ENCODE measurements at regions of chr2 and their contacts with region 1.

Region 1: DNA sequence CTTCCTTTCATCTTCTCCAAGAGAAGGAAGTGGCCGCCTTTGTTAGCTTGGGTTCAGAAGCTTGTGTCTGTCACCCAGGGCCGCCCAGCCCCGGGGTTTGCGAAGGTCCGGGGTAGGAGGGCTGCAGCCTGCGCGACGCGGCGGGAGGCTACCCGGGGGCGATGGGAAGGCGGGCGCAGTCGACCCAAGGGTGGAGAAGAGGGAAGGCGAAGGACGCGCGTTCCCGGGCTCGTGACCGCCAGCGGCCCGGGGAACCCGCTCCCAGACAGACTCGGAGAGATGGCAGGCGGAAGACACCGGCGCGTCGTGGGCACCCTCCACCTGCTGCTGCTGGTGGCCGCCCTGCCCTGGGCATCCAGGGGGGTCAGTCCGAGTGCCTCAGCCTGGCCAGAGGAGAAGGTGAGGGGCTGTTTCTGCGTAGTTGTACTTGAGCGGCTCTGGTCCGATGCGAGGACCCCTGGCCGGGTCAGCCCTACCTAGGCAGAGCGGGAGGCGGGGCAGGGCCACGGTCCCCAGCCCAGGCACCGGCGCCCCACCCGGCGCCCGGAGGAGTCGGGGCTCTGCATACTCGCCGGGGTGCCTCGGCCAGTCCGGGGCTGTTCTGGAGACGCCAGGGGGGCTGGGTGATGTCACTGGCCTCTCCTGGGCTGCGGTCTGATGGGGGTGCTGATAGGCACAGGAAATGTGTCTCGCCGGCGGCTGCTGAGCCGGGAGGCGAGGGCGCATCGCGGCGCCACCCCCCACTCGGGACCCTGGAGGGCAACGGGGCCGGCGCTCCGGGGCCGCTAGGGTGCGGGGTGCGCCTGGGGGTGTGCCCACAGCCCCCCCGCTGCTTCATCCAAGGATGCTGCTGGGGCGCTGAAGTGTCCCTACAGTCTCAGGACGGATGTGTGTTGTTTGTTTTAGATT is at the start of gene QPCT:
- DNase-seq: peak; percentile 47 to 85 (median 76)
- ATAC-seq: peak; percentile 88
- H3K4me3 ChIP-seq: peak within 1 kb of the TSS; percentile 52 to 55
- H3K4me3 Mint-ChIP-seq: peak within 1 kb of the TSS; percentile 83
- H3K27ac ChIP-seq: no peak within 1 kb of the TSS
- H3K27ac Mint-ChIP-seq: peak within 1 kb of the TSS; percentile 67
- H3K4me1 ChIP-seq: peaks cover 4% of the 10 kb centered on the region
- H3K4me1 Mint-ChIP-seq: peaks cover 17% of the 10 kb centered on the region
- H3K27me3 ChIP-seq: no peaks in the 10 kb centered on the region
- H3K27me3 Mint-ChIP-seq: peaks cover 10% of the 10 kb centered on the region
- CTCF ChIP-seq: no peak
- total RNA-seq, gene QPCT: 0.57 to 1.00 TPM

Region 2: GRCh38 chr2:37297632-37298031 is 47.1 kb before region 1 on chr2:
- CTCF ChIA-PET with region 1: no interaction called
- POLR2A ChIA-PET with region 1: no interaction called
- intact Hi-C with region 1: loop called in 1 of 2 experiments (anchors 1 kb)
- DNase-seq: no peak
- ATAC-seq: no peak
- H3K4me3 ChIP-seq: no peak overlapping the region
- H3K4me3 Mint-ChIP-seq: no peak overlapping the region
- H3K27ac ChIP-seq: no peak overlapping the region
- H3K27ac Mint-ChIP-seq: no peak overlapping the region
- H3K4me1 ChIP-seq: no peaks in the 10 kb centered on the region
- H3K4me1 Mint-ChIP-seq: peaks cover 23% of the 10 kb centered on the region
- H3K27me3 ChIP-seq: no peaks in the 10 kb centered on the region
- H3K27me3 Mint-ChIP-seq: no peaks in the 10 kb centered on the region
- CTCF ChIP-seq: no peak

Region 3: GRCh38 chr2:37376421-37377186 is 31.9 kb after region 1 on chr2:
- CTCF ChIA-PET with region 1: no interaction called
- POLR2A ChIA-PET with region 1: no interaction called
- intact Hi-C with region 1: loop called in 1 of 2 experiments (anchors 1 kb)
- DNase-seq: peak in 4 of 9 experiments; percentile 28 to 69 (median 53)
- ATAC-seq: peak; percentile 76
- H3K4me3 ChIP-seq: no peak overlapping the region
- H3K4me3 Mint-ChIP-seq: peak overlapping the region; percentile 16
- H3K27ac ChIP-seq: no peak overlapping the region
- H3K27ac Mint-ChIP-seq: peak overlapping the region; percentile 33
- H3K4me1 ChIP-seq: peaks cover 15% of the 10 kb centered on the region
- H3K4me1 Mint-ChIP-seq: peaks cover 18% of the 10 kb centered on the region
- H3K27me3 ChIP-seq: peaks cover 2 to 3% of the 10 kb centered on the region in 2 experiments
- H3K27me3 Mint-ChIP-seq: peaks cover 51% of the 10 kb centered on the region
- CTCF ChIP-seq: no peak